Heart right ventricle (tissue), 16 donors: ENCODE measurements at regions of chr2 and their contacts with region 1.

Region 1: GRCh38 chr2:174878537-174879147 is 114.4 kb upstream of the CHRNA1 start:
- DNase-seq: peak in 1 of 2 donors; percentile 20
- ATAC-seq: peak in 1 of 8 donors; percentile 54
- H3K4me3 ChIP-seq: peak overlapping the region in 8 of 10 donors; percentile 2 to 40 (median 34)
- H3K27ac ChIP-seq: no peak overlapping the region
- H3K4me1 ChIP-seq: peaks cover 0 to 13% (median 3%) of the 10 kb centered on the region in 9 donors
- H3K27me3 ChIP-seq: no peaks in the 10 kb centered on the region
- CTCF ChIP-seq: no peak

Region 2: DNA sequence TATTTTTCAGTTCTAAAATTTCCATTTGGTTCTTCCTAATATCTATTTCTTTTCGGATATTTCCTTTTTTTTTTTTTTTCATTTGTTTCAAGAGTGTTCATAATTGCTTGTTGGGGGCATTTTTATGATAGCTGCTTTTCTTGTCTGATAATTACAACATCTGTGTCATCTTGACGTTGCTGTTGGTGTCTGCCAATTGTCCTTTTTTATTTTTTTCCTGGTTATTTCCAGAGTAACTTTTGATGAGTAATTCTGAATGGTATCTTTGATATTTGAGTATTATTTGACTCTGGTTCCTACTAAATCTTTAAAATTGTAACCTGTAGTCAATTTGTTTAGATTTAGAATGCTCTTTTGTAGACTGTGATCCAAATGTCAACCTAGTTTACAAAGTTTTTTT is 63.1 kb before region 1 on chr2:
- intact Hi-C with region 1: no loop called
- DNase-seq: no peak
- ATAC-seq: no peak
- H3K4me3 ChIP-seq: no peak overlapping the region
- H3K27ac ChIP-seq: no peak overlapping the region
- H3K4me1 ChIP-seq: peaks cover 0 to 3% (median 0%) of the 10 kb centered on the region in 9 donors
- H3K27me3 ChIP-seq: no peaks in the 10 kb centered on the region
- CTCF ChIP-seq: no peak

Region 3: DNA sequence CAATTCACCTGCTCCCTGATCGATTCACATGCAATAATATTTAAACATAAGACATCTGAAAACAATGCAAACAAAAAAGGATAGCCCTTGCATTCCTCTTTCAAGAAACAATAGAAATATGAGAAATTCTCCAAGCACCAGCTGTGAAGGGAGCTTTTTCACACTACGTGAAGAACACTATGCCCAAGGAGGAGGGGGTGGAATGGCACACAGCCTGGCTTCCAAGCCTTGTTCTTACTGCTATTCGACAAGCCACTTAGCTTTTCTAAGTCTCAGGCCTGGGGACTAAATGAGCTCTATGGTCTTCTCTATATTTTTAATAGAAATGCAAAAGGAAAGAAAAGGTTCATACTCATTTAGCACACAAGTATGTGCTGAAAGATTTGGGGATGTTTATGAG is 22.2 kb before region 1 on chr2:
- intact Hi-C with region 1: no loop called
- DNase-seq: no peak
- ATAC-seq: no peak
- H3K4me3 ChIP-seq: no peak overlapping the region
- H3K27ac ChIP-seq: no peak overlapping the region
- H3K4me1 ChIP-seq: no peaks in the 10 kb centered on the region
- H3K27me3 ChIP-seq: no peaks in the 10 kb centered on the region
- CTCF ChIP-seq: no peak

Region 4: DNA sequence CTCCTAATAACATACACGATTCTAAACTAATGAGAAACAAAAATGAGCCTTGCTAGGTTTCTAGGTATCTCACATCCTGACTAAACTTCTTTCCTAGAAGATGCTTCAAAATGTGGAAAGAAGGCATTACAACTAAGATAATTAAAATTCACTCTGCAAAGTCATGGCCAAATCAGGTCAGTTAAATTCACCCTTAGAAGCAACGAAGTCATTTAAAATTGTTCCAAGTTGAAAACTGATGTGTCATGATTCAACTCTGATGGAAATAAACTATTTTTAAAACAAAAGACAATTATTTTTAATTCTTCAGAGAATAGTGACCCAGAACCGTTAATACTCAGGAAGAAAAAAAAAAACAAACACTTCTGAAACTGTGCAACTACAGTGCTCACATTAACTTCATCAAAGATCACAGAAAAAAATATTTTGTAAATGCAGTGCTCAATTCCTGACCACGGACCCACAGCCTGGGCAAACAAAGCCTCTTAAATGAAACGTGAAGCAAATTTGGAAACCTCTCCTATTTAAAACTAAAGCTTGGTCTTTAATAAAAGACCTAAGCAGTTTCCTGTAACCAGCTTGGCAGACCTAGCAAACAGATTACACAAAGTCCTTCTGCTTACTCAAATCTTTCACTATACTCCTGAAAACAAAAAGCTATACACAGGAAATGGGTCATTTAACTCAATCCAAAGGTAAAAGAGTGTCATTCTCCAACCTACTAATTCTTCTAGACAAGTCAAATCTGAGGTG is 87.5 kb after region 1 on chr2:
- intact Hi-C with region 1: loop called in 1 of 10 experiments (anchors 10 kb)
- DNase-seq: no peak
- ATAC-seq: no peak
- H3K4me3 ChIP-seq: peak overlapping the region in 1 of 10 donors; percentile 22
- H3K27ac ChIP-seq: peak overlapping the region in 7 of 10 donors; percentile 3 to 67 (median 39)
- H3K4me1 ChIP-seq: peaks cover 0 to 47% (median 24%) of the 10 kb centered on the region in 9 donors
- H3K27me3 ChIP-seq: no peaks in the 10 kb centered on the region
- CTCF ChIP-seq: no peak

Region 5: DNA sequence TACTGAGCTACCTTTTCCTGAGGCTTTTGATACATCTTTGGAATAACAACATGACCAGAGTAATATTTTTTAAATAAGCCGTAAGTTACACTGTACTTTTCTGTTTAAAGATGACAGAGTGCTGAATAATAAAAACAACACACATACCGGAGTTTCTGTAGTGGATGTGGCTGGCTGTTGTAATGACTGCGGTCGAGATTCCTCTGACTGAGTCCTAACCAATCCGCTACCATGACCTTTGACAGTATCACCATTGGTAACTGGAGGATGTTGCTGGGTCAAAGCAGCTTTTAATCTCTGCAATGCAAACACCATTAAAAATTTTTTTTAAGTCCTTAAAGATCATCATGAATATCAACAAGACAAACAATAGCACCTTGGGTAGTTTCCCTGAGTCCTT is 218.7 kb after region 1 on chr2:
- intact Hi-C with region 1: no loop called
- DNase-seq: no peak
- ATAC-seq: no peak
- H3K4me3 ChIP-seq: no peak overlapping the region
- H3K27ac ChIP-seq: no peak overlapping the region
- H3K4me1 ChIP-seq: peaks cover 0 to 9% (median 0%) of the 10 kb centered on the region in 9 donors
- H3K27me3 ChIP-seq: no peaks in the 10 kb centered on the region
- CTCF ChIP-seq: no peak